ENCODE measurements at regions of chr7 and their contacts with region 1.

Region 1: GRCh38 chr7:97027427-97028234 is 3.0 kb upstream of the DLX5 start:
- DNase-seq: peak; percentile 58 to 73 (median 66)
- H3K4me3 ChIP-seq: peak overlapping the region; percentile 13 to 73 (median 28)
- H3K4me3 Mint-ChIP-seq: peak overlapping the region; percentile 81 to 91
- H3K27ac ChIP-seq: no peak overlapping the region
- H3K27ac Mint-ChIP-seq: peak overlapping the region in 2 of 7 donors; percentile 38 to 50
- H3K4me1 ChIP-seq: peaks cover 21 to 23% of the 10 kb centered on the region in 2 donors
- H3K4me1 Mint-ChIP-seq: peaks cover 37% of the 10 kb centered on the region
- H3K27me3 ChIP-seq: peaks cover 49 to 75% of the 10 kb centered on the region in 2 donors
- H3K27me3 Mint-ChIP-seq: peaks cover 52 to 68% (median 60%) of the 10 kb centered on the region in 3 donors
- CTCF ChIP-seq: peak; percentile 80

Region 2: DNA sequence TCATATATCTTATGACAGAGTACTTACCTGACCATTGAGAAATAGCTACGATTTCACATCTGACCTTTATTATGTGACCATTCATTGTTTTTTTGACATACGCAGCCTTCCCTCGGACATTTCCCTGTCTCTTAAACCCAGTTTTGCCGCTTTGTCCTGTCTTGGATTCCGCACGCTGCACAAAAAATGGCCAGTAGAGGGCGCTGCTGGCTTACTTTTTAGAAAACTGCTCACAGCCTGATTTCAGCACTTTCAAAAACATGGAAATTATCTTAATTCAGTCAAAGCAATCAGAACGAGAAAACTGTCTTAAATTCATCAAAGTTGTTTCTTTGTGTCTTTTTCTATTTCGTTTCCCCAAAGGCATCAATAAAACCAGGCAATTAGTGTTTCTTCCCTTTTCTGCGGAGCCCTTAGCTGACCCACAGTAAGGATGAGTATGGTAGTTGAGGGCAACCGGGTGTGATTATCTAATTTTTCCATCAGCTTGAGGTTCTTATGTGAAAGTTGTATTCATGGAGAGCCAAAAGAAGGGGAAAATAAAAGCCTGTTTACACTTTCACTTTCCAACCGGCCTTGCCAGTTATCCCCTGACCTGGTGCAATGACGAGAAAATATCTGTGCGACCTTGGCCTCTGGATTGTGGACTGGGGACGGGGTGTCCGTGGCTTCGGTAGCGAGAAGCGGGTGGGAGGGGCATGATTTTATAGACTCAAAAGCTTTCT is 1110.9 kb before region 1 on chr7:
- intact Hi-C with region 1: loop called (anchors 2 to 5 kb)
- DNase-seq: peak; percentile 32 to 55 (median 42)
- H3K4me3 ChIP-seq: no peak overlapping the region
- H3K4me3 Mint-ChIP-seq: peak overlapping the region in 1 of 2 donors; percentile 77
- H3K27ac ChIP-seq: no peak overlapping the region
- H3K27ac Mint-ChIP-seq: no peak overlapping the region
- H3K4me1 ChIP-seq: no peaks in the 10 kb centered on the region
- H3K4me1 Mint-ChIP-seq: peaks cover 3% of the 10 kb centered on the region
- H3K27me3 ChIP-seq: peaks cover 9 to 13% of the 10 kb centered on the region in 2 donors
- H3K27me3 Mint-ChIP-seq: peaks cover 10 to 16% (median 12%) of the 10 kb centered on the region in 3 donors
- CTCF ChIP-seq: peak; percentile 90

Region 3: GRCh38 chr7:96075510-96076349 is 951.9 kb before region 1 on chr7:
- intact Hi-C with region 1: loop called (anchors 5 to 10 kb)
- DNase-seq: peak in 1 of 3 donors; percentile 3
- H3K4me3 ChIP-seq: peak overlapping the region in 1 of 3 experiments; percentile 34
- H3K4me3 Mint-ChIP-seq: peak overlapping the region; percentile 49 to 78
- H3K27ac ChIP-seq: no peak overlapping the region
- H3K27ac Mint-ChIP-seq: no peak overlapping the region
- H3K4me1 ChIP-seq: peaks cover 0 to 3% of the 10 kb centered on the region in 2 donors
- H3K4me1 Mint-ChIP-seq: peaks cover 9% of the 10 kb centered on the region
- H3K27me3 ChIP-seq: peaks cover 43 to 53% of the 10 kb centered on the region in 2 donors
- H3K27me3 Mint-ChIP-seq: peaks cover 41 to 52% (median 45%) of the 10 kb centered on the region in 3 donors
- CTCF ChIP-seq: peak; percentile 73

Region 4: GRCh38 chr7:96084881-96085551 is 942.6 kb before region 1 on chr7:
- intact Hi-C with region 1: loop called in 1 of 2 experiments (anchors 10 kb)
- DNase-seq: no peak
- H3K4me3 ChIP-seq: no peak overlapping the region
- H3K4me3 Mint-ChIP-seq: no peak overlapping the region
- H3K27ac ChIP-seq: no peak overlapping the region
- H3K27ac Mint-ChIP-seq: no peak overlapping the region
- H3K4me1 ChIP-seq: no peaks in the 10 kb centered on the region
- H3K4me1 Mint-ChIP-seq: no peaks in the 10 kb centered on the region
- H3K27me3 ChIP-seq: peaks cover 0 to 2% of the 10 kb centered on the region in 2 donors
- H3K27me3 Mint-ChIP-seq: peaks cover 2 to 6% (median 5%) of the 10 kb centered on the region in 3 donors
- CTCF ChIP-seq: no peak

Region 5: DNA sequence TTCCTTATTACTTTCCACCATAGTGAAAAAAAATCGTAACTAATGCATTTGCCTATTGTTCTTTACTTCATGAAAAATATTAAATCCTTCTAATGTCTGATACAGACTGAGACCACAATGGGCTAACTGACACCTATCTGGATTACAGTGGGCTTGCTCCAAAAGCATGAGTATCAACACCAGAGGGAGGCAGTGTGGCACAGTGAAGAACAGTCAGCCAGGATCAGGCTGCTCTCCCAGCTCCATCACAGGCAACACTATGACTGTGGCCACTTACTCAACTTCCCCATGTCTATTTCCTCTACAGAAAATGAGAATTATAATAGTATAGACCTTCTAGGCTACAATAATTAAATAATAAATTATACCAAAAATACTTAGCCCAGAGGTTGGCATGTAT is 802.9 kb before region 1 on chr7:
- intact Hi-C with region 1: loop called in 1 of 2 experiments (anchors 5 kb)
- DNase-seq: peak in 2 of 3 donors; percentile 9 to 32
- H3K4me3 ChIP-seq: no peak overlapping the region
- H3K4me3 Mint-ChIP-seq: no peak overlapping the region
- H3K27ac ChIP-seq: no peak overlapping the region
- H3K27ac Mint-ChIP-seq: no peak overlapping the region
- H3K4me1 ChIP-seq: no peaks in the 10 kb centered on the region
- H3K4me1 Mint-ChIP-seq: peaks cover 3% of the 10 kb centered on the region
- H3K27me3 ChIP-seq: no peaks in the 10 kb centered on the region
- H3K27me3 Mint-ChIP-seq: no peaks in the 10 kb centered on the region
- CTCF ChIP-seq: peak; percentile 27

Region 6: DNA sequence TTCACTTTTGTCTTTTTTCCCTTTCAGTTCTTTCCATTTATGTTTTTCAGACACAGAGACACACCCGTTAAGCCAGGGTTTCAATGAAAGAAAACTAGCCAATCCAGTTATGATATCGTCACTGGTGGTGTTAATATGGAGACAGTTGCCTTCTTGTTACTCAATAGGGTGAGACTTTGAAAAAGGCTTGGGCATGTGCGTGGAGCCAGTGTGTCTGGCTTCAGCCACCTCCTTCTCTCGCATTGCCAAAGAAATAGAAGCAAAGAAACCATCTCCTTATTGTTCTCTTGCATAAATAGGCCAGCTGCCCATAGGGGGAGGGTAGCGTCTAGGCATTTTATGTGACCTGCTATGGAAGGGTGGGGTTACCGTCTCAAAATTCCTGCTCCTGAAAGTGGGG is 106.4 kb before region 1 on chr7:
- intact Hi-C with region 1: no loop called
- DNase-seq: no peak
- H3K4me3 ChIP-seq: no peak overlapping the region
- H3K4me3 Mint-ChIP-seq: no peak overlapping the region
- H3K27ac ChIP-seq: no peak overlapping the region
- H3K27ac Mint-ChIP-seq: no peak overlapping the region
- H3K4me1 ChIP-seq: no peaks in the 10 kb centered on the region
- H3K4me1 Mint-ChIP-seq: peaks cover under 1% of the 10 kb centered on the region
- H3K27me3 ChIP-seq: no peaks in the 10 kb centered on the region
- H3K27me3 Mint-ChIP-seq: peaks cover 0 to 1% (median under 1%) of the 10 kb centered on the region in 3 donors
- CTCF ChIP-seq: no peak

Region 7: GRCh38 chr7:97075928-97076327 is 48.3 kb after region 1 on chr7:
- intact Hi-C with region 1: no loop called
- DNase-seq: no peak
- H3K4me3 ChIP-seq: no peak overlapping the region
- H3K4me3 Mint-ChIP-seq: no peak overlapping the region
- H3K27ac ChIP-seq: no peak overlapping the region
- H3K27ac Mint-ChIP-seq: no peak overlapping the region
- H3K4me1 ChIP-seq: no peaks in the 10 kb centered on the region
- H3K4me1 Mint-ChIP-seq: no peaks in the 10 kb centered on the region
- H3K27me3 ChIP-seq: no peaks in the 10 kb centered on the region
- H3K27me3 Mint-ChIP-seq: peaks cover 3 to 19% (median 4%) of the 10 kb centered on the region in 3 donors
- CTCF ChIP-seq: no peak